ENCODE measurements at regions of chr12 and their contacts with region 1.

Region 1: GRCh38 chr12:108337235-108338223 is 1.6 kb downstream of the CMKLR1 start:
- DNase-seq: peak; percentile 17 to 36
- ATAC-seq: peak; percentile 40 to 57 (median 53)
- H3K4me3 ChIP-seq: peak overlapping the region; percentile 60
- H3K4me3 Mint-ChIP-seq: peak overlapping the region; percentile 91
- H3K27ac ChIP-seq: peak overlapping the region; percentile 71
- H3K27ac Mint-ChIP-seq: peak overlapping the region; percentile 94 to 96
- H3K4me1 ChIP-seq: peaks cover 66% of the 10 kb centered on the region
- H3K4me1 Mint-ChIP-seq: peaks cover 62 to 82% of the 10 kb centered on the region in 2 donors
- H3K27me3 ChIP-seq: no peaks in the 10 kb centered on the region
- H3K27me3 Mint-ChIP-seq: no peaks in the 10 kb centered on the region
- CTCF ChIP-seq: peak; percentile 69

Region 2: GRCh38 chr12:108289350-108290161 is 48.0 kb before region 1 on chr12:
- intact Hi-C with region 1: loop called (anchors 10 kb)
- DNase-seq: no peak
- ATAC-seq: no peak
- H3K4me3 ChIP-seq: no peak overlapping the region
- H3K4me3 Mint-ChIP-seq: no peak overlapping the region
- H3K27ac ChIP-seq: no peak overlapping the region
- H3K27ac Mint-ChIP-seq: peak overlapping the region; percentile 79 to 98
- H3K4me1 ChIP-seq: peaks cover 17% of the 10 kb centered on the region
- H3K4me1 Mint-ChIP-seq: peaks cover 68 to 84% of the 10 kb centered on the region in 2 donors
- H3K27me3 ChIP-seq: no peaks in the 10 kb centered on the region
- H3K27me3 Mint-ChIP-seq: no peaks in the 10 kb centered on the region
- CTCF ChIP-seq: no peak

Region 3: GRCh38 chr12:108302403-108303311 is 34.9 kb before region 1 on chr12:
- intact Hi-C with region 1: loop called (anchors 1 kb)
- DNase-seq: no peak
- ATAC-seq: no peak
- H3K4me3 ChIP-seq: no peak overlapping the region
- H3K4me3 Mint-ChIP-seq: peak overlapping the region; percentile 79
- H3K27ac ChIP-seq: no peak overlapping the region
- H3K27ac Mint-ChIP-seq: peak overlapping the region; percentile 91 to 98
- H3K4me1 ChIP-seq: peaks cover 98% of the 10 kb centered on the region
- H3K4me1 Mint-ChIP-seq: peaks cover 97 to 100% of the 10 kb centered on the region in 2 donors
- H3K27me3 ChIP-seq: no peaks in the 10 kb centered on the region
- H3K27me3 Mint-ChIP-seq: no peaks in the 10 kb centered on the region
- CTCF ChIP-seq: no peak

Region 4: DNA sequence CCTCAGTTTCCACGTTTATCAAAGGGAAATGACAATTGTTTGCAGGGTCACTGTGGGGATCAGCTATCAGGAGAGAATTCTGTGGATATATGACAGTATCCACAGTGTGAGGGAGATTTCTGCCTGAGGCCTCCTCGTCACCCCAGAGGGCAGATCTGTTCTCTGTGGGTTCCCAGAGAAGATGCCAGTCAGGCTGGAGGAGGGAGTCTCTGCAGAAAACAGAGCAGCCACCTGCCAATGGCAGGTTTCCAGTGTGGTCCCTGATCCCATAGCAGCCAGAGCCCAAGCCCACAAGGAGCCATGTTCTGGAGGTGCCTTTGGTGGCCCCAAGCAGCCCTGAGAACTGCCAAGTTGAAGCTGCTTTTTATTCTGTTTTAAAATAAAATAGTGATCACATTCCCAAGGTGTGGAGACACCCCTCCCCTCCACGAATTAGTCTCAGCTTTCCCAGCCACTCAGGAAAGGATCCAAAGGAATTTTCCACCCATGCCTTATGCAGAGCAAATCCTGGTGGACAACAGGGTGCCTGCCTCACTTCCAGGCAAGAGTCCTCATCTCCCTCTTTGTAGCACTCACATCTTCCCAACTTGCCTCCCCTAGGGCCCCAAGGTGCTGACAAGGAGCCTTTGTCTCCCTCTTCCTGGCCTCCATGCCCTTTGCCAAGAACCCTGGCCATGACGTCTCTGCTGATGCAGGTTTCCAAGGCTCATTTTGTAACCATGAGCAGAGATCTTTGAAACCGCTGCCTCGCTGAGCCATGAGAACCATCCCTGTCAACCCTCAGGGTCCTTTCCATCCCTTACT is 18.9 kb before region 1 on chr12:
- intact Hi-C with region 1: loop called (anchors 2 kb)
- DNase-seq: no peak
- ATAC-seq: no peak
- H3K4me3 ChIP-seq: no peak overlapping the region
- H3K4me3 Mint-ChIP-seq: no peak overlapping the region
- H3K27ac ChIP-seq: peak overlapping the region; percentile 20
- H3K27ac Mint-ChIP-seq: peak overlapping the region; percentile 91 to 98
- H3K4me1 ChIP-seq: peaks cover 83% of the 10 kb centered on the region
- H3K4me1 Mint-ChIP-seq: peaks cover 81 to 94% of the 10 kb centered on the region in 2 donors
- H3K27me3 ChIP-seq: no peaks in the 10 kb centered on the region
- H3K27me3 Mint-ChIP-seq: no peaks in the 10 kb centered on the region
- CTCF ChIP-seq: no peak

Measured in natural killer cell (primary cell).